PC-3 (cell line): ENCODE measurements at regions of chr2 and their contacts with region 1.

Region 1: DNA sequence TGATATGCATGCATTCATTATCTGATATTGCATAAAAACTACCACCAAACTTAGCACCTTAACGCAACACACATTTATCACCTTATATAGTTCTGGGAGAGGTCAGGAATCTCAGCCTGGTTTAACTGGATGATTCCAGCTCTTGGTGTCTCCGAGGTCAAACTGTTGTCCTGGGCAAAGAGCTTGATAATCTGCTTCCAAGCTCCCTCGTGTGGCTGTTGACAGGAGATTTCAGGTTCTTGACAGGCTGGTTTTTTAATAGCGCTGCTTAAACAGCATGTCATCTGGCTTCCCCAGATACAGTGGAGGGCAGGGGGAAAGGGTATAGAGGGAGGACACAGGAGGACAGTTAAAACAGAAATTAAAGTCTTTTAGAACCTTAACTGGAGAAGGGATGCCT is 785.0 kb downstream of the CNTNAP5 start:
- DNase-seq: peak; percentile 32
- ATAC-seq: 0 out of 2 replicates have a peak, but pooled peaks have one; percentile 29
- H3K4me3 ChIP-seq: no peak overlapping the region
- H3K27ac ChIP-seq: no peak overlapping the region
- H3K4me1 ChIP-seq: no peaks in the 10 kb centered on the region
- H3K27me3 ChIP-seq: no peaks in the 10 kb centered on the region
- CTCF ChIP-seq: peak; percentile 53

Region 2: DNA sequence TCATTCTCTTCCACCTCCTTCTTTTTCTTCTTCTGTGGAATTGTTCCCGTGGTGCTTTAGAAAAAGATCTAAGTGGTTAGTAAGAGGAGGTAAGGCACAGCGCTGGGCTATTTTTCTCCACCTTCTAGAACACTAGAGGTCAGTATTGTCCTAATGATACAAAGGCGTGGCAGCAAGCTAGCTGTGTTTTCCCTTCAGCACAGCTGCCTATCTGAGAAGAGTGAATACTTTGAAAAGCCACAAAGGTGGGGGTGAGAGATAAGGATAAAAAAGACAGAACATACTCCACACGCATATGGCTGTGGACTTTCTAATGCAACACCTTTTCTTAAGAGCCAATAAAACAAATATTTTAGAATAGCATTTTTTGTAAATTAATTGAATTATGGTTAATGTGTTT is 783.0 kb before region 1 on chr2:
- CTCF ChIA-PET with region 1: interaction called, 6 read pairs
- POLR2A ChIA-PET with region 1: no interaction called
- intact Hi-C with region 1: loop called (anchors 1 kb)
- DNase-seq: peak; percentile 75
- ATAC-seq: peak; percentile 92
- H3K4me3 ChIP-seq: no peak overlapping the region
- H3K27ac ChIP-seq: no peak overlapping the region
- H3K4me1 ChIP-seq: no peaks in the 10 kb centered on the region
- H3K27me3 ChIP-seq: peaks cover 6% of the 10 kb centered on the region
- CTCF ChIP-seq: peak; percentile 89

Region 3: GRCh38 chr2:124547700-124548099 is 262.4 kb before region 1 on chr2:
- CTCF ChIA-PET with region 1: no interaction called
- POLR2A ChIA-PET with region 1: no interaction called
- intact Hi-C with region 1: no loop called
- DNase-seq: no peak
- ATAC-seq: no peak
- H3K4me3 ChIP-seq: no peak overlapping the region
- H3K27ac ChIP-seq: no peak overlapping the region
- H3K4me1 ChIP-seq: no peaks in the 10 kb centered on the region
- H3K27me3 ChIP-seq: no peaks in the 10 kb centered on the region
- CTCF ChIP-seq: no peak